ENCODE measurements at regions of chr7 and their contacts with region 1.

Region 1: DNA sequence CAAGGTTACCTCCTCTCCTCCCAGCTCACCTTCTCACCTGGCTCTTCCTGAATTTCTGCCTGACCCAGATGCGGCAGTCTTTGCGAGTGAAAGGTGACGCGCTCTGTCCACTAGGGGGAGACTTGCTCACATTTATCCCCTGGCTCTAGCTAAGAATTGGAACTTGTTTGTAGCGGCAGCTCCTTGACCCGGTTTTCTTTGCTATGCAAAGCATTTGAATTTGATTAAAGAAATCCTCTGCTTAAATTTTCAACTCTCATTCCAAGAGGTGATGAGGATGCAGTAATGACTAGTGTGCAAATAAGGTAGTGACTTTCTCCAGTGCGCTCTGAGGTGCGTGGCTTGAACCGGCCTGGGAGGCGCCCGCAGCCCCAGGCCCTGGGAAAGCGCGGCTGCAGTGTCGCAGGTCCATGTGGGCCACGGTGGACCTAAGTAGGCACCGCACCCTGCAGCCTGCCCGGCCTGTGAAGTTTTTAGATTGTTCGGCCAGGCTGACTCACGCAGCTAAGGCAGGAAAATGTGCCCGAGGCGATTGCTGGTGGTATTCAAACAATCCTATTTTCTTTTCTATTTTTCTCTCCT is 336.9 kb upstream of the NPSR1 start:
- DNase-seq: peak; percentile 85
- H3K4me3 Mint-ChIP-seq: peak overlapping the region; percentile 59
- H3K27ac Mint-ChIP-seq: peak overlapping the region; percentile 32
- H3K4me1 Mint-ChIP-seq: peaks cover 25% of the 10 kb centered on the region
- H3K27me3 Mint-ChIP-seq: no peaks in the 10 kb centered on the region
- CTCF ChIP-seq: peak; percentile 85

Region 2: DNA sequence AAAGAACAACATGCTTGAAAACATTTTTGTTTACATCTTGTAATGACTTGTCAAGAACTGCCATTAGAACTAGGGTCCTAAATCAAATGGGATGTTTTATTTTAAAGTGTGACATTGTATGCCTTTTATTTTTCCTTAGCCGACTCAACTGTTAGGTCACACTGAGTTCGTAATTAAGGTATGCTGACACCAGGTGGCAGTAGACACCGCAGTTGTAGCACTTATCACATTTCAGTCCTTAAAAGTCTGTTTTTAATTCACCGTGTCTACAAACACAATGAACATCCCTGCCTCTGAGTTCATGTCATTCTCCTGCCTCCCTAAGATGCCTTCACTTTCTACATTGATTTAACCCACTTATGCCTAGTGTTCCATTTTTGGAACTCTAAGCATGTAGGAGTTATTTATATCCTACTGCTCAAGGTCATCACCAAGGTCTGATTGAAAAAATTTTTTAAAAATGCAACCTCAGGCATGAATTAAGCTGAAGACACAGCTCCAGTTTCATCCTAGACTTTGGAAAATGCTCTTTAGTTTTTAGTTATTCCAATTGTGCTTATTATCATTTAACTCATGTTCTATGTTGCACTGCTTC is 229.7 kb before region 1 on chr7:
- CTCF ChIA-PET with region 1: interaction called, 9 read pairs
- POLR2A ChIA-PET with region 1: no interaction called
- intact Hi-C with region 1: loop called (anchors 1 kb)
- DNase-seq: peak; percentile 68
- H3K4me3 Mint-ChIP-seq: no peak overlapping the region
- H3K27ac Mint-ChIP-seq: no peak overlapping the region
- H3K4me1 Mint-ChIP-seq: peaks cover 11% of the 10 kb centered on the region
- H3K27me3 Mint-ChIP-seq: no peaks in the 10 kb centered on the region
- CTCF ChIP-seq: peak; percentile 61

Region 3: DNA sequence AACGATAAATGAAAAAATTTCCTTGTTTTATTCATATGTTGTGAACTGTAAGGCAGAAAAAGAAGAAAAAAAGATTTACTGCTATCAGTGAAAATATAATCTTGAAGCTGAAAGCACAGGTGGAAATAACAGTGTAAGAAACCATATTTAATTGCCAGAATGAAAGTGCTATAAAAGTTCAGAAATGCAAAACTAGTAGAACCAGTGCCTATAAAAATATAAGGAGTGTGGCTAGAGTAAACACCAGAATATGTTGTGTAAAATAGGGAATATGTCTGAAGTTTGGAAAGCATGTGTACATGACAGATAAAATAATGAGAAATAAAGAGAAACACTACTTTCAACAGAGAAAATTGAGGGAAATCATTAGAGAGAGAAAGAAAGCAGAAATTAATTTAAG is 13.6 kb before region 1 on chr7:
- CTCF ChIA-PET with region 1: interaction called, 12 read pairs
- POLR2A ChIA-PET with region 1: interaction called, 3 read pairs
- intact Hi-C with region 1: no loop called
- DNase-seq: no peak
- H3K4me3 Mint-ChIP-seq: no peak overlapping the region
- H3K27ac Mint-ChIP-seq: no peak overlapping the region
- H3K4me1 Mint-ChIP-seq: no peaks in the 10 kb centered on the region
- H3K27me3 Mint-ChIP-seq: no peaks in the 10 kb centered on the region
- CTCF ChIP-seq: no peak

Region 4: DNA sequence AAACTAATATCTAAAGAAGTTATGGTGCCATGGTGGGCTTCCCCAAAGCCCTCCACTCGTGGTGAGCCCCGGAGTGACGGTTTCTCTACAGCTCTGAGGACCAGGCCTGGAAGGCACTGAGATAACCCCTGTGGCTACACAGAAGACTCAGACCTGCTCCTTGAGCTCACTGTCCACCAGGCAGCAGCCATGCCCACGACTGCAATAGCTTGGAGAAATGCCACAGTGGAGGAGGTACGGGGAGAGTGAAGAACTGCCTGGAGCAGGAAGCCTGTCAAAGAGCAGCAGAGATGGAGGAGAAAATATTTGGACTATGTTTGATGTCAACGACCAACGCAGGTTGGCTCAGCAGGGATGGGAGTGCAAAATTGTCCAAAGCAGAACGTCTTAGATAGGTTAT is 36.9 kb after region 1 on chr7:
- CTCF ChIA-PET with region 1: interaction called, 10 read pairs
- POLR2A ChIA-PET with region 1: interaction called, 4 read pairs
- intact Hi-C with region 1: no loop called
- DNase-seq: no peak
- H3K4me3 Mint-ChIP-seq: no peak overlapping the region
- H3K27ac Mint-ChIP-seq: no peak overlapping the region
- H3K4me1 Mint-ChIP-seq: peaks cover 16% of the 10 kb centered on the region
- H3K27me3 Mint-ChIP-seq: no peaks in the 10 kb centered on the region
- CTCF ChIP-seq: no peak

Region 5: GRCh38 chr7:34425187-34425586 is 104.1 kb after region 1 on chr7:
- CTCF ChIA-PET with region 1: interaction called, 15 read pairs
- POLR2A ChIA-PET with region 1: no interaction called
- intact Hi-C with region 1: loop called (anchors 1 kb)
- DNase-seq: peak; percentile 14
- H3K4me3 Mint-ChIP-seq: no peak overlapping the region
- H3K27ac Mint-ChIP-seq: no peak overlapping the region
- H3K4me1 Mint-ChIP-seq: peaks cover under 1% of the 10 kb centered on the region
- H3K27me3 Mint-ChIP-seq: no peaks in the 10 kb centered on the region
- CTCF ChIP-seq: no peak

Region 6: GRCh38 chr7:34584526-34584925 is 263.4 kb after region 1 on chr7:
- CTCF ChIA-PET with region 1: interaction called, 15 read pairs
- POLR2A ChIA-PET with region 1: no interaction called
- intact Hi-C with region 1: no loop called
- DNase-seq: no peak
- H3K4me3 Mint-ChIP-seq: no peak overlapping the region
- H3K27ac Mint-ChIP-seq: no peak overlapping the region
- H3K4me1 Mint-ChIP-seq: no peaks in the 10 kb centered on the region
- H3K27me3 Mint-ChIP-seq: no peaks in the 10 kb centered on the region
- CTCF ChIP-seq: no peak

Region 7: DNA sequence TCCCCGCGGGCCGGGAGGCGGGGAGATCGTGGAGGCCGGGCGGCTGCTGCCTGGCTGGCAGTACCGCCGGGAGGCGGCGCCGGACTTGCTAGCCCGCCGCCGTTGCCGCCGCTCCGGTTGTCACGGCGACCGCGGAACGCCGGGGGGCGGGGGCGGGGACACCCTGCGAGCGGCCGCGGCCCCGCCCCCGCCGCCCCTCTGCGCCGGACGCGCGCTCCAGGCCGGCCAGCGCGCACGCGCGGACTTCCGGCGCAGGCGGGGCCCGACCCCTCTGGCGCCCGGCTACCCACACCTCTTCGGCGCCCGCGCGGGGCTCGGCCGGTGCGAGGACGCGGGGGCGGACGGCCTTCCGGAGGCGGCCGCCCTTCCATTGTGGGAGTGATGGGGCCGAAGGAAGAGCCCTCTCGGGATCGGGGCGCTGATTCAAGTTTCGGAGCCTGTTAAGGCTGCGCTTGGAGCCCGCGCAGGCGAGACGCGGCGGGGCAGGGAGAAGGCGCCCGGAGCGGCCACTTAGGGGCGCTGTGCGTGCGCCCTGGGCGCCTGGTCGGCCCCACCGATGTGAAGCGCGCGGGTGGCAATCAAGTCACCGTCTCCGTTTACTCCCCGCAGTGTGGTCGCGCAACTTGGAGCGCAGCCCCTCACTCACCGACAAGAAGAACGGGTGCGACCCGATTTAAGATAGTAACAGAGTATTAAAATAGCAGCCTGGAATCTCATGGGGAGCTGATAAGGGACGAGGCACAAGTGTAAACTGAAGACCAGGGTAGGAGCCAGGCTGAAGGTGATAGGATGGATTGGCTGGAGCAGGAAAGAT is 716.6 kb after region 1 on chr7:
- CTCF ChIA-PET with region 1: no interaction called
- POLR2A ChIA-PET with region 1: interaction called, 3 read pairs
- intact Hi-C with region 1: loop called (anchors 5 kb)
- DNase-seq: peak; percentile 87
- H3K4me3 Mint-ChIP-seq: peak overlapping the region; percentile 90
- H3K27ac Mint-ChIP-seq: peak overlapping the region; percentile 3
- H3K4me1 Mint-ChIP-seq: peaks cover 20% of the 10 kb centered on the region
- H3K27me3 Mint-ChIP-seq: peaks cover 16% of the 10 kb centered on the region
- CTCF ChIP-seq: peak; percentile 82